HEK293 (cell line): ENCODE measurements at regions of chrX and their contacts with region 1.

Region 1: GRCh38 chrX:105701084-105702055 is 121.0 kb upstream of the NRK start:
- H3K4me3 ChIP-seq: no peak overlapping the region
- H3K27ac ChIP-seq: no peak overlapping the region
- H3K4me1 ChIP-seq: 0 out of 2 replicates have a peak, but pooled peaks cover 3% of the 10 kb centered on the region
- CTCF ChIP-seq: no peak

Region 2: GRCh38 chrX:105552395-105552794 is 149.0 kb before region 1 on chrX:
- CTCF ChIA-PET with region 1: no interaction called
- POLR2A ChIA-PET with region 1: no interaction called
- H3K4me3 ChIP-seq: no peak overlapping the region
- H3K27ac ChIP-seq: no peak overlapping the region
- H3K4me1 ChIP-seq: no peaks in the 10 kb centered on the region
- CTCF ChIP-seq: no peak

Region 3: DNA sequence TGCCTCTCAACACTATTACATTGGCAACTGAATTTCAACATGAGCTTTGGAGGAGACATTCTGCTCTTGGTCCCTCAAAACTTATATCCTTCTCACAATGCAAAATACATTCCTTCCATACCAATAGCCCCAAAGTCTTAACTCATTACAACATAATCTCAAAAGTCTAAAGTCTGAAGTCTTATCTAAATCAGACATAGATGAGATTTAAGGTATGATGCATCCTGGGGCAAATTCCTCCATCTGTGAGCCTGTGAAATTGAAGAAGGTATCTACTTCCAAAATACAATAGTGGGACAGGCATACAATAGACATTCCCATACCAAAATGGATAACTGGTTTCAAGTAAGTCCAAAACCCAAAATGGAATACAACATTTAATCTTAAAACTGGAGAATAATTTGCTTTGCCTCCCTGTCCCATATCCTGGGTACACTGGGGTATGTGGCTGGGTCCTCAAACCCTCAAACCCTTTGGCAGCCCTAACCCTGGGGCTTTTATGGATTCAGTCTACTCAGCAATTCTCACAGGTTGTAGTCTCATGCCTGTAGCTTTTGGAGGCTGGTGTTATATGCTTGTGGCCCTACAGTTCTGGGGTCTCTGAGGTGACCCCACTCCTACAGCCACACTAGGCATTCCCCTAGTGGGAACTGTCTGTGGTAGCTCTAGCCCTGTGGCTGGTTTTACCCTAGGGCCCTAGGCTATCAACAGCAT is 10.3 kb after region 1 on chrX:
- CTCF ChIA-PET with region 1: interaction called, 10 read pairs
- POLR2A ChIA-PET with region 1: no interaction called
- H3K4me3 ChIP-seq: no peak overlapping the region
- H3K27ac ChIP-seq: no peak overlapping the region
- H3K4me1 ChIP-seq: no peaks in the 10 kb centered on the region
- CTCF ChIP-seq: no peak

Region 4: DNA sequence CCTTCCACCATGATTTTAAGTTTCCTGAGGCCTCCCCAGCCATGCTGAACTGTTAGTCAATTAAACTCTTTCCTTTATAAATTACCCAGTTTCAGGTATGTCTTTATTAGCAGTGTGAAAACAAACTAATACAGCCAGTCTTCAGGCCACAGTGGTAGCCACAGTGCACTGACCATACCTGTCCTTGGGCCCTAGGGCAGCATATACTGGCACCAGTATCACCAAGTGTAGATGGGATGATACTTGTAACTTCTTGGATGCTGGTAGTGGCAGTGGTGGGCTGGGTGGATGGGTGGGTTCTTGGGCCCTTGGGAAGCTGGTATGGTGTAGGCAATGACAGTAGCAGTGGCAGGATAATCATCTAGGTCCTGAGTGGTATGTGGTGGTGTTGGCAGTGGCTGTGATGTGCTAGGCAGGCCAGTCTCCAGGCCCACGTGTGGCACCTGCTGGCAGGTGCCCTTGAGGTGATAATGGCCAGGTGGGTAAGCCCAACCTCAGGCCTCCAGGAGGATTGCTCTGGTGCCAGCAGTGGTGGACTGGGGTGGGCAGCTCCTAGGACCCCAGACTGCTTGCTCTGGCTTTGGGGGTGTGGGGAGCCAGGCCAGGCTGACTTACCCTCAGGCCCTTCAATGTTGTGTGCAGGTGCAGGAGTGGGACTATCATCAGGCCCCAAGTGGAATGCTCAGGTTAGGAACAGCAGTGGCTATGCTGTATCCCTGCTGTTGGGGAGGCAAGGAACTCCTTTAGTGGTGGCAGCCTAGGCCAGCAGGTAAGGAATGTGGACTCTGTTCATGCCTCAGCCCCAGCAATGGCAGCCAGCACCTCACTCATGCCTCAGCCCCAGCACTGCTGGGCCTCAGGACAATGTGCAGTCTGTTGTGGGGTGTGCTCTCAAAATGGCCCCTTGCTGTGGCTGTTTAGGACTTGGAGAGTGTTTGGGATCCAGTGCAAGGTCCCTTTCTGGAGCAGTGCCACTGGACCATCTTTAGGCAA is 312.7 kb after region 1 on chrX:
- CTCF ChIA-PET with region 1: no interaction called
- POLR2A ChIA-PET with region 1: no interaction called
- H3K4me3 ChIP-seq: no peak overlapping the region
- H3K27ac ChIP-seq: no peak overlapping the region
- H3K4me1 ChIP-seq: no peaks in the 10 kb centered on the region
- CTCF ChIP-seq: no peak